Calu3 (cell line): ENCODE measurements at regions of chr4 and their contacts with region 1.

Region 1: DNA sequence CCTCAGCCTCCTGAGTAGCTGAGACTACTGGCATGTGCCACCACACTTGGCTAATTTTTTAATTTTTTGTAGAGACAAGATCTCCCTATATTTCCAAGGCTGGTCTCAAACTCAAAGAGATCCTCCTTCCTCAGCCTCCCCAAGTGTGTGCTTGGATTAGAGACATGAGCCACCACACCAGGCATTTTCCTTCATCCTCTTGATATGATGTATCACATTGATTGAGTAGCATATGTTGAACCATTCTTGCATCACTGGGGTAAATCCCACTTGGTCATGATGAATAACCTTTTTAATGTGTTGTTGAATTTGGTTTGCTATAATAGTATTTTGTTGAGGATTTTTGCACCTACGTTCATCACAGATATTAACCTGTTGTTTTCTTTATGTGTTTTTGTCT is 24.2 kb upstream of the PPM1K start:
- DNase-seq: no peak
- H3K4me3 Mint-ChIP-seq: no peak overlapping the region
- H3K27ac Mint-ChIP-seq: no peak overlapping the region
- H3K4me1 Mint-ChIP-seq: no peaks in the 10 kb centered on the region
- H3K27me3 Mint-ChIP-seq: no peaks in the 10 kb centered on the region
- CTCF ChIP-seq: no peak

Region 2: GRCh38 chr4:88334967-88335665 is 26.5 kb after region 1 on chr4:
- CTCF ChIA-PET with region 1: no interaction called
- intact Hi-C with region 1: loop called (anchors 1 kb)
- DNase-seq: no peak
- H3K4me3 Mint-ChIP-seq: no peak overlapping the region
- H3K27ac Mint-ChIP-seq: no peak overlapping the region
- H3K4me1 Mint-ChIP-seq: no peaks in the 10 kb centered on the region
- H3K27me3 Mint-ChIP-seq: no peaks in the 10 kb centered on the region
- CTCF ChIP-seq: no peak